ENCODE measurements at regions of chr6 and their contacts with region 1.

Region 1: DNA sequence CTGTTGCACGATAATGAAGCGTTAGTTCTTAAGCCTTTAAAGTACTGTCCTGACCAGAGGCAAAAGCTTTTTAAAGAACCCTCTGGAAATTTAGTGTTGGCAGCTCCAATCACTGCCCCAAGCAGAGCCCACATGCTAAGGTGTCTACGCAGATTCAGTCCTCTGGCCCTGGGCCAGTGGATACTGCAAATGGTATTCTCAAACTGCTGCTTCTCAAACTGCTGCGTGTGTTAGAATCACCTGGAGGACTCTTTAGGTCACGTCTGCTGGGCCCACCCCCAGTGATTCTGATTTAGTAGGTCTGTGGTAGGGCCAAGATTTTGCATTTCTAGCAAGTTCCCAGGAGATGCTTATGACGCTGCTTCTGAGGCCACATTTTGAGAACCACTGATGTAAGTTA is 96.0 kb upstream of the CCDC28A start:
- DNase-seq: no peak
- H3K4me3 ChIP-seq: no peak overlapping the region
- CTCF ChIP-seq: no peak

Region 2: GRCh38 chr6:138640028-138640427 is 37.5 kb before region 1 on chr6:
- in situ Hi-C with region 1: loop called (anchors 5 kb)
- DNase-seq: no peak
- H3K4me3 ChIP-seq: no peak overlapping the region
- CTCF ChIP-seq: no peak

Region 3: DNA sequence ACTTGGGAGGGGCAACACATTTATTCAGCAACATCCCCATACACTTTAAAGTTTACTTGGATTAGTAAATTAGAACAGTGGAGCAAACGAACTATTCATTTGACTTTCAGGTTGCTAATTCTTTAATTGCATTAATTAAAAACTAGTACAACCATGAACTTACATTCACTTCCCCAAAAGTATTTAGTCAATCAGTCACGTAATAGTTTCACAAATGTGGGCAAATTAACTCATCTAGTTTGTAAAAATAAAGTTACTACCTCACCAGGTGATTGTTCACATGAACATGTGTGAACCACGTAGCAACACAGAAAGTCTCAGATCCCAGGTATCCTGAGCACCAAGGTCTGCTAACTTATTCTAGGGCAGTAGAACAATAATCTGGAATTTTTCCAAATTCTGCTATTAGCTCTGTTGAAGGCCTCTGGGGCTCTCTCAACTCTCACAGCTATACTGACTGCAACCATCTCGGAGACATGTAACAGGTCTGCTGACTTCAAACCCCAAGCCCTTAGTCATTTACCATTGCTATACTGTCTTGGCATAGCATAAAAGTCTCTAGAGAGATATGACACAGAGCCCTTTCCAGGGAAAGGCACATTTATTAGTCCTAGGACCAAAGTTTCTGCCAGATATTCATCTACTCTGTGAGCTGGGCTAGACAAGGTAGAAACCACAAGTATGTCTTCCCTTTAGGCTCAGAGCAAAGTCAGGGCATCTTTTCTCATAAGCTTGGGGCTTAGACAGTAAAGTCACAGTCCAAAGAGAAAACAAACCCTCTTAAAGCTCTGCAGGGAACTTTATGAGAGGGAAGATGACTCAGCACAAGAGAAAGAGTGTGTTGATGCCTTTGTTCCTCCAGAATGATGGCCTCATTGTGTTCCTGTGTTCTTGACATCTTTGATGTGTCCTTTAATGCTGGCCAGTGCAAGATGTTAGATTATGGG is 45.2 kb after region 1 on chr6:
- in situ Hi-C with region 1: loop called (anchors 5 kb)
- DNase-seq: peak; percentile 92
- H3K4me3 ChIP-seq: no peak overlapping the region
- CTCF ChIP-seq: no peak